Common myeloid progenitor, CD34-positive (primary cell): ENCODE measurements at regions of chr3 and their contacts with region 1.

Region 1: GRCh38 chr3:101849051-101849720 is at the start of gene NFKBIZ:
- DNase-seq: peak; percentile 91 to 97 (median 97)
- H3K4me3 ChIP-seq: peak within 1 kb of the TSS; percentile 89 to 100 (median 94)
- H3K27ac ChIP-seq: peak within 1 kb of the TSS; percentile 94 to 97
- H3K4me1 ChIP-seq: peaks cover 14 to 41% (median 24%) of the 10 kb centered on the region in 4 experiments
- H3K27me3 ChIP-seq: no peaks in the 10 kb centered on the region

Region 2: GRCh38 chr3:101791778-101792177 is 57.4 kb before region 1 on chr3:
- CTCF ChIA-PET with region 1: no interaction called
- POLR2A ChIA-PET with region 1: no interaction called
- DNase-seq: no peak
- H3K4me3 ChIP-seq: no peak overlapping the region
- H3K27ac ChIP-seq: no peak overlapping the region
- H3K4me1 ChIP-seq: no peaks in the 10 kb centered on the region
- H3K27me3 ChIP-seq: no peaks in the 10 kb centered on the region

Region 3: GRCh38 chr3:101827211-101828174 is 21.7 kb before region 1 on chr3:
- CTCF ChIA-PET with region 1: interaction called, 4 read pairs
- POLR2A ChIA-PET with region 1: interaction called, 37 read pairs
- DNase-seq: peak; percentile 86 to 94 (median 93)
- H3K4me3 ChIP-seq: peak overlapping the region; percentile 45 to 90 (median 78)
- H3K27ac ChIP-seq: peak overlapping the region; percentile 81 to 86
- H3K4me1 ChIP-seq: peaks cover 13 to 28% (median 24%) of the 10 kb centered on the region in 4 experiments
- H3K27me3 ChIP-seq: no peaks in the 10 kb centered on the region